Posterior cingulate gyrus (tissue), 11 donors: ENCODE measurements at regions of chr10 and their contacts with region 1.

Region 1: DNA sequence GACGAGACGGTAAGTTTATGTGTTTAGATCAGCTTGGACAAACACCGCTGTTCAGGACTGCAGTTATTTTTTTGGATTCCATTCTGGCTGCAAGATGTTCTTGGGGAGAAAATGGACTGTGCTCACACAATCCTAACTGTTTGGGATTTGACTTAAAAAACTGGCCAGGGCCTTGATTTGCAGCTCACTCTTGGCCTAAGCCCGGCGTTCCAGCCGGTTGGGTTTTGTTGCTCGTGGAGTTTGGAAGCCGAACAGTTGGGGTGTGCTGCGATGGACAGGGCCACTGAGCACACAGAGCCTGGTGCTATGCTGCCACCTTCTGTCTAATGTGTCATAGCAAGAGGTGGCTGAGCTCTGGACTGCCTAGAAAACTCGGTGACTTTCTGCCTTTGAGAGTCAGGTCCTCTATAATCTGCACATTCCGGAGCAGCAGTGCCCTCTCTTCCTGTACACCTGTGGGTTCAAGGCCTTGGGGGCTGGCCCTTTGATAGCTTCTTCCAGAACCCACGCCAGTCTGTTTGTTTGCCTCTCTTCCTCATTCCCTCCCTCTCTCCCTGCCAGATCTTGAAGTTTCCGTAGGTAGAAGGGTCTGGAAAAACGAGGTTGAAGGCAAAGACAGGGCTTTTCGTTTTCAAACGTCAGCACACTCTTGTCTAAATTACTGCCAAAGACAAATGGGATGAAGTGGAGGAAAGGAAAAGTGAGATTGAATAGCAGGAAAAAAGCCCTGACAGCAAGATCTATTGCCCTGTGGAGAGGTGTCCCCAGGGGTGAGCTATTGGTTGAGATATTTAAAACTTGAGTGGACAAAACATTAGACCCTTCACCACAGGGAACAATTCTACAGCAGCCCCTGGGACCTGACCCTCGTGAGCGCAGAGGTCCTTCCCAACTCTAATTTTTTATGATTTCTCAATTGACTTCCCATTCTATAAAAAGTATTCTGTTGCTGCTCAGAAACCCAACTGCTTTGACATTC is 167.5 kb upstream of the HABP2 start:
- DNase-seq: peak; percentile 67 to 97 (median 80)

Region 2: GRCh38 chr10:112471878-112472487 is 913.3 kb before region 1 on chr10:
- intact Hi-C with region 1: loop called (anchors 5 kb)
- DNase-seq: no peak

Region 3: DNA sequence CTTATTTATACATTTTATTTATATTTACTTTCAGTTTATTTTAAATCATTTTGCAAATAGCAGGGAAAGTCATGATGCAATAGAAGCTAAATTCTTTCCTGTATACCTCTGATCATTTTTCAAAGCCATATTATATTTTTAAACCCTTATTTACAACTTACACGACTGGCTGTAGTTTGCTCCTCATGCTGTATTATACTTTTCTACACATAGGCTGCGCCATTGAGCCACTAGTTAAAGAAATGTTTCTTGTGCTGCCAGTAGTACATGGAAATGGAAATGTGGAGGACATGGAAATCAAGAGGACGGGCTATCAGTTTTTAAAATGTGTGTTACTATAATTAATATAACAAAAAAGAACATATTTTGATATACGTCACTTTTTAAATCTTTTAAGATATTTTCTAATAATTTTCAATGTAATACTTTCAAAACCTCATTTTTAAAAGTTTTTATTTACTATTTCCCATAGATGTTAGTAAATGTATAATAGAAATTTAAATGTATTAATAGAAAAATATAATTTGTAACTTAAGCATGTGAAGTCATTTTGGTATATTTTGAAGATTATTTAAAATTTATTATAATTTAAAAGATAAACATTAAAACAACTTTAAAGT is 819.8 kb before region 1 on chr10:
- intact Hi-C with region 1: loop called (anchors 10 kb)
- DNase-seq: peak in 1 of 10 donors; percentile 33

Region 4: DNA sequence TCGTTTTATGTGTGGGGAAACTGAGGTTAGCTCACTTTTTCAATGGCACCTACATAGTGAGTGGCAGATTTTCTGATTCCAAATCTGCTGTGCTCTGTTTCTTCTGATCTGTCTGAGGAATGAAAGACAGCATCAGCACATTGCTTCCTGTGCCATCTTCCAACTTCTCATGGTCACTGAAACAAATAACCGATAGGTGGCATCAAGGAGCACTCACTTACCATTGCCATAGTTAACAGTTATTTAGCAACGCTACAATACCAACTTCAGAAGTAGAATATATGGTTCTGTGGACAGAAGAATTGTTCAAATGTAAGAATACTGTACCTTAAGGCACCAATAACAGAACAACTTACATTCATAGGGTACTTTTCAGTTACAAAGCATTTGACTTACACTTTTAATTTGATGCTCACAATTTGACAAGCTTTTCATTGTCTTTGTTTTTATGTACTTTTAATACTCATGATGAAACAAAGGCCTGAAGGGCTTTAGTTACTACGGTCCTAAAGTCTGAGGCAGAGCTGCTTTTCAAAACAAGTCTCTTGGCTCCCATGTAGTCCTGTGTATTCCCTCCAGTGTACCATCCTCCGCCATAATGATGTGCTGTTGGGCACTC is 664.1 kb before region 1 on chr10:
- intact Hi-C with region 1: loop called (anchors 10 kb)
- DNase-seq: no peak

Region 5: GRCh38 chr10:113126229-113127201 is 258.8 kb before region 1 on chr10:
- intact Hi-C with region 1: loop called (anchors 2 kb)
- DNase-seq: peak; percentile 41 to 96 (median 74)

Region 6: DNA sequence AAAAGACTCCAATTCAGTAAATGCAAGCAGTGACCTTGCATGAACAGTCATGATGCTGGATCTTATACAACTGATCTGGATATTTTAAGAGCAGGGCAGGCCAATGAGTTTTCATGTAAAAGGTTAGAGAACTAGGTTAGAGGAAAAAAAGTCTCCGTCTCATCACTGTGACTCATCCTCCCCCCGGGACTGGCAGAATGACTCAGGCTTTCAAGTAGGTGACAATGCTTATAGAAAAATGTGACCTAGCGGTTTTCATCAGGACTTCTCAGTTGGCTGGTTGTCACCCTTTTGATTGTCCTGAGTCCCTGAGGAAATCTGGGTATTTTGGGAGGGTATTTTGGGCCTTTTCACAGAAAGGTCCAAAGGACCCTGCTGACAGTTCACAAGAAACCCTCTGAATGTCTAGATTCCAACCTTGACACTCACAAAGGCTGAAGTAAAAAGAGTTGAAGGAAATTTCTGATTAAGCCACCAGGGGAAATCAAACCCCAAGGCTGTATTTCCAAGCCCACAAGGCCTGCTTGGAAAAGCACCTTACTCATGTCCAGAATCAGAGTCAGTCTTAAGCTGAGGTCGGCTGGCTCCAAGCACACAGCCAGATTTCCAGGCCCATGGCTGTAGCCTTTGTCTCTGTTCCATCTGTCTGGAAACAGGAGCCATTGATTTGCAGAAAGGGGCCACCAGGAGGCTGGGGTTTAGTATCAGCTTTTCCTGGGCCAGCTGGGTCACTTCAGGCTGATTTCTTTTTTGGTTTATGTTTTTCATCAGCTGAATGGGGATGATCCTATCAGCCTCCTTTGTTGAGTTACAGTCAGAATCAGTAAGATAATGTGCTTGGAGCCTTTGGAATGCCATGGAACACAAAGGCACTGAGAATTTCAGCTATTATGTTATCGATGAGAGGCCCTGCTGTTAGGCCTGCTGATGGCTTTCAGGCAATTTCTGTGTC is 58.9 kb before region 1 on chr10:
- intact Hi-C with region 1: no loop called
- DNase-seq: peak in 2 of 10 donors; percentile 26 to 82